SK-N-SH (cell line): ENCODE measurements at regions of chr16 and their contacts with region 1.

Region 1: GRCh38 chr16:56700195-56700594 is 17.9 kb downstream of the MT1X start:
- DNase-seq: no peak
- H3K4me3 ChIP-seq: no peak overlapping the region
- H3K27ac ChIP-seq: no peak overlapping the region
- H3K4me1 ChIP-seq: no peaks in the 10 kb centered on the region; a peak in 1 of 4 replicates
- H3K27me3 ChIP-seq: no peaks in the 10 kb centered on the region
- CTCF ChIP-seq: no peak
- EP300 ChIP-seq: no peak
- RAD21 ChIP-seq: no peak

Region 2: DNA sequence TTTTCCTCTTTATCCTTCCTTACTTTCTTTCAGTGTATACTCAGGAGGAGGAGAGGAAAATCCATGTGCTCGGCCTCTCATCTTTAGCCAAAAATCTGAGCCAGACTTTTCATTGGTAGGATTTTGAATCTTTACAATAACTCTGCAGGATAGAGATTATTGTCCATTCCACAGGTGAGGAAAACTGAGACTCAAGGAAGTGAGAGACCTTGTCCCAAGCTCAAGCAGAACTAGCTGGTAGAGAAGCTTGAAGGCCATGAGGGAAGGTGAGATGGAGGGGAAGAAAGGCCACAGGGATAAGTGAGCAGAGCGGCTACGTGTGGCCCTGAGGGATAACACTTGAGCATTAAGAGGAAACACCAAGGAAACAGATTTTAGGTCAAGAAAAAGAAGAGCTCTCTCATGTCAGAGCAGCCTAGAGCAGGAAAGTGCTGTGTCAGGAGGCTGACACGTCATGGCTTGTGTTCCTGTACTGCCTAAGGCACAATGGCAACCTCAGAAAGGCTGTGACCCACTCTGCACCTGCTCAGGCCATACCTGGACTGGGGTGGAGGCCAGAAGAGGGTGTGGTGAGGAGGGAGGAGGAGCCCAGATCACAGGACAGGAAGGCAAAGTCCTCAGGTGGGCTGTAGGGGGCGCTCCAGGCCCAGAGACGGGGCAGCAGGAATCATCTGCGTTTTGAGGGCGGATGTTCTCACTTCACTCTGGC is 123.5 kb before region 1 on chr16:
- CTCF ChIA-PET with region 1: interaction called, 38 read pairs
- POLR2A ChIA-PET with region 1: no interaction called
- DNase-seq: peak; percentile 63
- H3K4me3 ChIP-seq: no peak overlapping the region
- H3K27ac ChIP-seq: no peak overlapping the region
- H3K4me1 ChIP-seq: no peaks in the 10 kb centered on the region
- H3K27me3 ChIP-seq: no peaks in the 10 kb centered on the region
- CTCF ChIP-seq: peak; percentile 53
- EP300 ChIP-seq: no peak
- RAD21 ChIP-seq: peak; percentile 73

Region 3: DNA sequence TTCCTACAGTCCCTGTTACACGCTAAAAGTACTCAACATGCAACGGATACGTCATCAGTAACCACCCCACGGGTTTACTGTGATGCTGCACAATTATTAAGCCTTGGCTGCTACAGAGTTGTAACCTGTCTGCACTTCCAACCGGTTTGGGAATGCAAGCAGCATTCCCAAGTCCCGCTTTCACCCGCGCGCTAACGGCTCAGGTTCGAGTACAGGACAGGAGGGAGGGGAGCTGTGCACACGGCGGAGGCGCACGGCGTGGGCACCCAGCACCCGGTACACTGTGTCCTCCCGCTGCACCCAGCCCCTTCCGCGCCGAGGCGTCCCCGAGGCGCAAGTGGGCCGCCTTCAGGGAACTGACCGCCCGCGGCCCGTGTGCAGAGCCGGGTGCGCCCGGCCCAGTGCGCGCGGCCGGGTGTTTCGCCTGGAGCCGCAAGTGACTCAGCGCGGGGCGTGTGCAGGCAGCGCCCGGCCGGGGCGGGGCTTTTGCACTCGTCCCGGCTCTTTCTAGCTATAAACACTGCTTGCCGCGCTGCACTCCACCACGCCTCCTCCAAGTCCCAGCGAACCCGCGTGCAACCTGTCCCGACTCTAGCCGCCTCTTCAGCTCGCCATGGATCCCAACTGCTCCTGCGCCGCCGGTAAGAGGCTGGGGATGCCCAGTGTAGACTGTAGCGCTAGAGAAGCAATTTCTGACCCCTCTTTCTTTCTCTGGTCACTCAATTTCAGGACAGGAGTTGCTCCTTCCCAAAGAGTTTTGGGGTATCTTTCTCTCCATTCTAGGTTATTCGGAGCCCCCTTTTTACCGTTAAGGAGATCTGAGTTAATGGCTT is 91.9 kb before region 1 on chr16 and contains the start of gene MT2A:
- CTCF ChIA-PET with region 1: interaction called, 138 read pairs
- POLR2A ChIA-PET with region 1: no interaction called
- DNase-seq: peak; percentile 95
- H3K4me3 ChIP-seq: peak within 1 kb of the TSS; percentile 72 to 94
- H3K27ac ChIP-seq: peak within 1 kb of the TSS; percentile 86 to 96
- H3K4me1 ChIP-seq: peaks cover 35 to 46% of the 10 kb centered on the region in 2 experiments; a peak in 3 of 4 replicates
- H3K27me3 ChIP-seq: no peaks in the 10 kb centered on the region
- CTCF ChIP-seq: no peak
- EP300 ChIP-seq: no peak; a peak in 1 of 4 replicates
- RAD21 ChIP-seq: no peak
- polyA plus RNA-seq, gene MT2A: 79.9 and 133 TPM in 2 replicates

Region 4: GRCh38 chr16:56716761-56717160 is 16.6 kb after region 1 on chr16:
- CTCF ChIA-PET with region 1: interaction called, 15 read pairs
- POLR2A ChIA-PET with region 1: no interaction called
- DNase-seq: no peak
- H3K4me3 ChIP-seq: no peak overlapping the region
- H3K27ac ChIP-seq: no peak overlapping the region
- H3K4me1 ChIP-seq: peaks cover 0 to 3% of the 10 kb centered on the region in 2 experiments; a peak in 1 of 4 replicates
- H3K27me3 ChIP-seq: no peaks in the 10 kb centered on the region
- CTCF ChIP-seq: no peak
- EP300 ChIP-seq: no peak
- RAD21 ChIP-seq: no peak

Region 5: GRCh38 chr16:56789360-56789759 is 89.2 kb after region 1 on chr16:
- CTCF ChIA-PET with region 1: interaction called, 19 read pairs
- POLR2A ChIA-PET with region 1: no interaction called
- DNase-seq: peak; percentile 42
- H3K4me3 ChIP-seq: no peak overlapping the region
- H3K27ac ChIP-seq: no peak overlapping the region
- H3K4me1 ChIP-seq: peaks cover 5 to 21% of the 10 kb centered on the region in 2 experiments; a peak in 3 of 4 replicates
- H3K27me3 ChIP-seq: no peaks in the 10 kb centered on the region
- CTCF ChIP-seq: peak; percentile 56
- EP300 ChIP-seq: no peak
- RAD21 ChIP-seq: peak; percentile 83